Thyroid gland (tissue), 4 donors: ENCODE measurements at regions of chr21 and their contacts with region 1.

Region 1: DNA sequence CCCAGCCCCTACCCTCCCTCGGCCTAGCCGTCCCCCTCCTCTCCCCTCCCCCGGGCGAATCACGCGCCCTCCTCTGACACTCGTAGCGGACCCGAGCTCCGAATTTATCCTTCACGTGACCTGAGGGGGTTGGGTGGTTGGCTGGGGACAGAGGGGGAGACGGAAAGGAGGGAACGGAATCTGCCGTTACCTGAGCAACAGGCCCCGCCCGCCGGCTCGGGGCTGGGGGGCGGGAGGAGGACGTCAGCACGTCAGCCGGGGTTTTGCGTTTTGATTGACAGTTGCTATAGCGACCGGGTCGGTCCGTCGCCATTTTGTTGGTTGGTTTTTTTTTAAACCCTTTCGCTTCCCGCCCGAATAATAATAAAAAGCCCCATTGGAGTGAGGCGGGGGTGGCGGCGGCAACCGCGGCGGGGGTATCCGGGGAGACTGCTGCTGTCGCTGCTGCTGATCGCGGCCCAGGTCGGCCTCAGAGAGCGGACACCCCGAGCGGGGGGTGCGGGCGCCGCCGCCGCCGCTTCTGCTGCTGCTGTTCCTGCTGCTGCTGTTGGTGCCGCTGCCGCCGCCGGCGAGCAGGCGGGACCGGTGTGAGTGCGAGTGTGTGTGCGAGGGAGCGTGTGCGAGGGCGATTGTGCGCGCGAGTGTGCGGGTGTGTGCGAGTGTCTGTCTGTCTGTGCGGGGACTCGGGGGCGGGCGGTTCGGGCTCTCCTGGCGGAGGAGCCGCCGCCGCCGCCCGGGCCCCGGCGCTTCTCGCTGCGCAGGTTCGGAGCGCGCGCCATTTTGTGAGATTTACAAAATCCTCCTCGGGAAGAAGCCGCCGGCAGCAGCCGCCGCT is at the start of gene DYRK1A:
- DNase-seq: peak; percentile 99
- H3K4me3 ChIP-seq: peak within 1 kb of the TSS; percentile 76 to 84 (median 82)
- H3K27ac ChIP-seq: peak within 1 kb of the TSS; percentile 98 to 100 (median 99)
- H3K4me1 ChIP-seq: peaks cover 23 to 29% of the 10 kb centered on the region in 2 donors
- H3K27me3 ChIP-seq: no peaks in the 10 kb centered on the region
- CTCF ChIP-seq: no peak
- POLR2A ChIP-seq: peak in 1 of 2 donors; percentile 74
- total RNA-seq, gene DYRK1A: 104 to 299 (median 116) TPM

Region 2: GRCh38 chr21:37079211-37079824 is 287.4 kb before region 1 on chr21:
- intact Hi-C with region 1: loop called (anchors 5 kb)
- DNase-seq: no peak
- H3K4me3 ChIP-seq: no peak overlapping the region
- H3K27ac ChIP-seq: no peak overlapping the region
- H3K4me1 ChIP-seq: peaks cover 18 to 19% of the 10 kb centered on the region in 2 donors
- H3K27me3 ChIP-seq: no peaks in the 10 kb centered on the region
- CTCF ChIP-seq: no peak
- POLR2A ChIP-seq: no peak

Region 3: DNA sequence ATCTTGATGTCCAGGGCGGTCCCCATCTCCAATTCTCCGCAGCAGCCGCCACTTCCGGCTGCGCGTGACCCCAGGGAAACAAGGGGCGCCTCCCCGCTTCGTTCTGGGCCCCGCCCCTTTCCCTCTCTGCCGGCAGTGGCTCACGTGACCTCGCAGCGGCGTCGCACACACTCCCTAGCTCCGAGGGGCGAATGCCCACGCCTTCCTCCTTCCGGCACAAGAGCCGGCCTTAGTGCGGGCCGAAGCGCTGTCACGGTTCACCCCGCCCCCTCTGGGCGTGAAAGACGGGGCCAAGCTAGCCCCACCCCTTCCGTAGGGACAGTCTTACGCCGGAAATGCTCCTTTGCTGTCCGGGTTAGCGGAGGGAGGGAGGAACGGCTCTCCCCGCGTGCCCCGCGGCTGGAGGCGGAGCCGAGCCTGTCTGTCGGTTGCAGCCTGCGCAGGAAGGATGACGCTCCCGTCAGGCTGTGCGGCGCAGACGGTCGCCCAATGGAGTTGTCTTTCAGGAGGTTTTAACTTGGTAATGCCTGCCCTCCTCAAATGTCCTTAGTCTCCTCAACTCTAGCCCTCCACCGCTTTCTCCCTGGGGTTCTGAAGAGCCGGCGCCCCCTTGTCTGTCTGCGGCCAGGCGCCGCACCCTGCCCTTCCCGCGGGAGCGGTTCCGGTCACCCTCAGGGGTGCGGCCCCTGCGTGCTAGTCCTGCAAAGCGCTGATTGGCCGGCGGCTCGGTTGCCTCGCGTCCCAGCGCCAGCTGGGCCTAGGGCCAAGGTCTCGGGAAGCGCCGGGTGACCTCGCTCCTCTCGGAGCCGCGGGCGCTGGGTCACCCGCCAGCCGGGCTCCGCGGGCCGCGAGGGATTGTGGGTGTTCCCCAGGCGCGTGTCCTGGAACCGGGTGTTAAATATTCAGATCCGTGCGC is 99.2 kb before region 1 on chr21 and contains the start of gene VPS26C:
- intact Hi-C with region 1: loop called (anchors 2 kb)
- DNase-seq: peak; percentile 99
- H3K4me3 ChIP-seq: peak within 1 kb of the TSS; percentile 50 to 99 (median 88)
- H3K27ac ChIP-seq: peak within 1 kb of the TSS; percentile 91 to 98 (median 97)
- H3K4me1 ChIP-seq: peaks cover 13 to 16% of the 10 kb centered on the region in 2 donors
- H3K27me3 ChIP-seq: no peaks in the 10 kb centered on the region
- CTCF ChIP-seq: no peak
- POLR2A ChIP-seq: peak; percentile 67 to 82
- total RNA-seq, gene VPS26C: 44.8 to 76.2 (median 62.0) TPM

Region 4: DNA sequence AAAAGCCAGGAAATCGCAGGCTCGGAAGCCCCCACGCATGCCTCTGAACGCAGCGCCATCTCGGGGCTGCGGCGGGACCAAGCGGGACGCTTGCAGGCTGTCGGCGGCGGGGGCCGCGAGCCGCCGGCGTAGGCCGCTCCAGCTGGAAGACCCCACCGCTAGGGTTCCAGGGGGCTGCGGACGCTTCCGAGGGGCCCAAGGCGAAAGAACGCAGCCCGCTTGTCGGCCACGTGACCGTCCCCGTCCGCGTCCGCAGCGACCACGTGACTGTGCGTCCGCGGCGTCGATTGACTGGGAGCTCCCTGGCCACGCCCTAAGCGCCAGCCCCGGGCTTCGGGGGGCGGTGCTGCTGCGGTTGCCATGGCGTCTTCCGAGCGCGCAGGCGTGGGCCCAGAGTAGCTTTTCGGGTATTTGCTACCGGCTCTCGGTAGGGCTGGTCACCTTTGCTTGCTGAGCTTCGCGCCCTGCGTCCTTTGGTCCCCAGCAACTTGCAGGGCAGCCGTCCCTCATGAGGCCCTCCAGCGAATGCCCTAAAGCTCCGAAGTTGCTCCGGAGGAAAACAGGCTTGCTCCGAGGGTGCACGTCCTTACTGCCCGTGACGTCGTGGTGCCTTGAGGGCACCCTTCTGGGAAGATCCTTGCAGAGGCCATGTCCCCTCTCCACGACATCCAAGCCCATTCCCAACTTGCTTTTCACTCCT is 197.1 kb after region 1 on chr21:
- intact Hi-C with region 1: loop called (anchors 10 kb)
- DNase-seq: peak; percentile 94 to 96
- H3K4me3 ChIP-seq: peak overlapping the region; percentile 29 to 72 (median 51)
- H3K27ac ChIP-seq: peak overlapping the region; percentile 54 to 87 (median 80)
- H3K4me1 ChIP-seq: peaks cover 13 to 19% of the 10 kb centered on the region in 2 donors
- H3K27me3 ChIP-seq: no peaks in the 10 kb centered on the region
- CTCF ChIP-seq: peak in 3 of 6 experiments; percentile 28 to 49 (median 42)
- POLR2A ChIP-seq: peak in 1 of 2 donors; percentile 80